K562 (cell line): ENCODE measurements at regions of chr7 and their contacts with region 1.

Region 1: DNA sequence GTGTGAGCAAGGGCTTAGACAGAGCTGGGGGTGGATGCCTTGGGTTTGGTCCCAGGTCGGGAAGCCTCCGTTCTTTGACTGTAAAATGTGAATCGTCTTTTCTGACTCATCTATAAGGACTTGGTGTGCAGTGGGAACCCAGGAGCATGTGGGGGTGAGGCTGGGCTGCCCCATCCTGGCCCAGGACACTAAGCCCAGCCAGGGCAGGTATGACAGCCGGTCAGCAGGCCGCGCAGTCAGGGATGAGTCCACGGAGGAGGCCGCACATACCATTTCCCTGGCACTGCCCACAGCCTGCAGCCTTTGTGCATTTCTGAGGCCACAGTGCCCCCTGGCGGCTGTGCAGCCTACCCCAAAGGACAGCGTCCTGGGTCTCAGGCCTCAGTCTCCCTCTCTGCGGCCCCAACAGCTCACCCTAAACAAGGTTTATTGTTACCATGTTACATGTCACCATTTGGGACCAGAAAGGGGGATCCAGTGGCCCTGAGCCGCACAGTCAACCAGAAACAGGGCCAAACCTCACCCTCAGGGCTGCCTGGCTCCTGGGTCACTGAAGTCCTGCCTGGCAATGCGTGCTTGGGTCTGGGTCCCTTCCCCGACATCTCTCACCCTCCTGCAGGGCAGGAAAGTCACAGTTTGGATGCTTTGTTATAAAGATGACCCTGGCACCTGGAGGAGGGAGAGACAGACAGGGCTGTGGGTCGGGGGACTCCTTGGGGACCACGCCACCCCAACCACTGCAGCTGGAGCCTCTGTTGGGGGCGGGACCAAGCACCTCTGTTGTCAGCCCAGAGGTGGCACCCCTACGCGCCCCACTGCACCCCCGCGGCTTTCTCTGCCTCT is 14.4 kb upstream of the SH2B2 start:
- DNase-seq: peak; percentile 80 to 87 (median 84)
- ATAC-seq: peak; percentile 85
- H3K4me3 ChIP-seq: no peak overlapping the region
- H3K27ac ChIP-seq: no peak overlapping the region
- H3K4me1 ChIP-seq: peaks cover 15 to 54% of the 10 kb centered on the region in 2 experiments; a peak in 4 of 5 replicates
- H3K27me3 ChIP-seq: peaks cover 0 to 10% of the 10 kb centered on the region in 2 experiments; a peak in 2 of 5 replicates
- CTCF ChIP-seq: peak; percentile 91 to 98 (median 92)
- EP300 ChIP-seq: peak; percentile 25; the same call in 1 of the 2 replicates
- POLR2A ChIP-seq: no peak
- RAD21 ChIP-seq: peak; percentile 96 to 98

Region 2: DNA sequence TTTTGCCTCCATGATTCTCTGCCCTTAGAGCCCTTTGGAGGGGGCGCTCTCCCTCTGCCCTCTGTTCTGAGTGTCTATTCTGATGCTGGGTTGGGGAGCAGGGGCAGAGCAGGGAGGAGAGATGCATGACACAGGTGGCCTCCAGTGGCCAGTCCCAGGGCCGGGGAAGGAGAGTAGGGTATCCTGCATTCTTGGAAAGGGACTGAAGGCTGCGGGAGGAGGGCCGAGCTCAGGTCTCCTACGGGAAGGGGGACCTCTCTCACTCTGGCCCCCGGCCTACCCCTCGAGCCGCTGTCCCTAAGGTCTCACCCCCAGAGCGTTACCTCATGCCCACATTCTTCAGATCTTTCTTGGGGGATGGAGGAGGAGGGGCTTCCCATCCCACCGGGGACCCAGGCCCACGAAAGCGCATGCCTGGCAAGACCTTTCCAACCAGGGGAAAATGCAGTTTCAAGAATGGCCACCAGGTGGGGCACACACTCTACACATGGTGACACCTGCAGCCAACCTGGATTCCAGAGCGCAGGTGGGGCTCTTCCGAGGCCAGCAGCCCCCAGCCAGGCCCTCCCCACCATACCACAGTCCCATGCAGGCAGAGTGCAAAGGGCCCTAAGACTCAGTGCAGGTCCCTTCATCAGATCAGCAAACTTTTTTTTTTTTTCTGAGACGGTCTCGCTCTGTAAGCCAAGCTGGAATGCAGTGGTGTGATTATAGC is 729.6 kb before region 1 on chr7:
- CTCF ChIA-PET with region 1: interaction called, 41 read pairs
- POLR2A ChIA-PET with region 1: no interaction called
- in situ Hi-C with region 1: loop called (anchors 5 kb)
- intact Hi-C with region 1: loop called (anchors 1 kb)
- DNase-seq: peak; percentile 68 to 81 (median 76)
- ATAC-seq: peak; percentile 76
- H3K4me3 ChIP-seq: no peak overlapping the region
- H3K27ac ChIP-seq: no peak overlapping the region
- H3K4me1 ChIP-seq: peaks cover 0 to 26% of the 10 kb centered on the region in 2 experiments; a peak in 1 of 5 replicates
- H3K27me3 ChIP-seq: peaks cover 0 to 5% of the 10 kb centered on the region in 2 experiments; a peak in 2 of 5 replicates
- CTCF ChIP-seq: peak; percentile 88 to 93 (median 91)
- EP300 ChIP-seq: no peak
- POLR2A ChIP-seq: no peak
- RAD21 ChIP-seq: peak; percentile 89 to 93

Region 3: DNA sequence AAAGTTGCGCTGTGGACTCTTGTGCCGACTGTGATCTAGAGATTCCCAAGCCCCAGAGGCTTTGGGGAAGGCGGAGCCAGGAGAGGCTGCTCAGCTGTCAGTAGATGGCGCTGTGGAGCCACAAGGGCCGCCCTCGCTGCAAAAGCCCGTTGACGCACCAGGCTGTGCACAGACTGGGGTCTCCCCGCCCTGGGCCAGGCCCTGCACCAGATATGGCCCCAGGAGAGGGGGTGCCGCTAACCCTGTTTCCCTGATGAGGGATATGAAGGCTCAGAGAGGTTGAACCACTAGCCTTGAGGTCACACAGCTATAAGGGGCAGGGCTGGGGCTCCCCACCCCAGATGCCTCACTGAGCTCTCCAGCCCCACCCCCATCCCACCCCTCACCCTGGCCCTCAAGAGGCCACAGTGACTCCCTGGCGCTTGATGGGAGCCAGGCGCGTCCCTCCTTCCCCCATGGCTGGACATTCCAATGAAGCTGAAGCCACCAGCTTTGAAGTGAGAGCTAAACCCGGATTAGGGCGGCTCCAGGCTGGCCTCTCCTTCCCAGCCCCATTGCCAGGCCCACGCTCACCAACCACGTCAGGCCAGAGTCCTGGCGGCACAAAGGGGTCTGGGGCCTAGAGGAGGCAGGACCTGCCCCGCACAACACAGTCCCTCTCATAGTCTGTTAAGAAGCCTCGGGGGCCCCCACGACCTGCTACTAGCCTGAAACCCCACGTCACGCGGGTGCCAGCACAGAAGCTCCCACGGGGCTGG is 669.6 kb before region 1 on chr7:
- CTCF ChIA-PET with region 1: interaction called, 5 read pairs
- POLR2A ChIA-PET with region 1: no interaction called
- in situ Hi-C with region 1: no loop called
- intact Hi-C with region 1: loop called (anchors 2 kb)
- DNase-seq: peak; percentile 80 to 91 (median 88)
- ATAC-seq: peak; percentile 97
- H3K4me3 ChIP-seq: no peak overlapping the region
- H3K27ac ChIP-seq: no peak overlapping the region
- H3K4me1 ChIP-seq: peaks cover 0 to 21% of the 10 kb centered on the region in 2 experiments; a peak in 2 of 5 replicates
- H3K27me3 ChIP-seq: peaks cover 0 to 60% of the 10 kb centered on the region in 2 experiments; a peak in 4 of 5 replicates
- CTCF ChIP-seq: peak; percentile 93 to 95 (median 94)
- EP300 ChIP-seq: no peak
- POLR2A ChIP-seq: no peak
- RAD21 ChIP-seq: peak; percentile 84 to 92

Region 4: GRCh38 chr7:101688183-101688831 is 584.0 kb before region 1 on chr7:
- CTCF ChIA-PET with region 1: interaction called, 3 read pairs
- POLR2A ChIA-PET with region 1: no interaction called
- in situ Hi-C with region 1: no loop called
- intact Hi-C with region 1: loop called (anchors 5 kb)
- DNase-seq: peak; percentile 87 to 95 (median 92)
- ATAC-seq: peak; percentile 96
- H3K4me3 ChIP-seq: peak overlapping the region; percentile 36
- H3K27ac ChIP-seq: peak overlapping the region; percentile 76; the same call in 2 of the 3 replicates
- H3K4me1 ChIP-seq: peaks cover 5 to 12% of the 10 kb centered on the region in 2 experiments; a peak in 3 of 5 replicates
- H3K27me3 ChIP-seq: peaks cover 0 to 8% of the 10 kb centered on the region in 2 experiments; a peak in 1 of 5 replicates
- CTCF ChIP-seq: peak; percentile 86 to 95 (median 93)
- EP300 ChIP-seq: no peak
- POLR2A ChIP-seq: no peak
- RAD21 ChIP-seq: peak; percentile 95 to 97